ENCODE measurements at regions of chr1 and their contacts with region 1.

Region 1: GRCh38 chr1:156773607-156774006 is 6.3 kb downstream of the PRCC start:
- DNase-seq: no peak
- ATAC-seq: no peak
- H3K4me3 ChIP-seq: no peak overlapping the region
- H3K27ac ChIP-seq: peak overlapping the region; percentile 56
- H3K4me1 ChIP-seq: peaks cover 13% of the 10 kb centered on the region
- H3K27me3 ChIP-seq: no peaks in the 10 kb centered on the region

Region 2: GRCh38 chr1:156728597-156729462 is 44.8 kb before region 1 on chr1 and contains the start of gene ISG20L2:
- intact Hi-C with region 1: loop called in 1 of 4 experiments (anchors 10 kb)
- DNase-seq: peak; percentile 98 to 99 (median 99)
- ATAC-seq: peak; percentile 96 to 97
- H3K4me3 ChIP-seq: peak within 1 kb of the TSS; percentile 64
- H3K27ac ChIP-seq: peak within 1 kb of the TSS; percentile 78
- H3K4me1 ChIP-seq: peaks cover 18% of the 10 kb centered on the region
- H3K27me3 ChIP-seq: no peaks in the 10 kb centered on the region
- total RNA-seq, gene ISG20L2: 13.0 to 23.0 (median 13.9) TPM

Region 3: GRCh38 chr1:157274698-157275534 is 501.3 kb after region 1 on chr1:
- intact Hi-C with region 1: no loop called
- DNase-seq: no peak
- ATAC-seq: no peak
- H3K4me3 ChIP-seq: no peak overlapping the region
- H3K27ac ChIP-seq: no peak overlapping the region
- H3K4me1 ChIP-seq: no peaks in the 10 kb centered on the region
- H3K27me3 ChIP-seq: no peaks in the 10 kb centered on the region